Naive thymus-derived CD4-positive, alpha-beta T cell (primary cell): ENCODE measurements at regions of chr1 and their contacts with region 1.

Region 1: DNA sequence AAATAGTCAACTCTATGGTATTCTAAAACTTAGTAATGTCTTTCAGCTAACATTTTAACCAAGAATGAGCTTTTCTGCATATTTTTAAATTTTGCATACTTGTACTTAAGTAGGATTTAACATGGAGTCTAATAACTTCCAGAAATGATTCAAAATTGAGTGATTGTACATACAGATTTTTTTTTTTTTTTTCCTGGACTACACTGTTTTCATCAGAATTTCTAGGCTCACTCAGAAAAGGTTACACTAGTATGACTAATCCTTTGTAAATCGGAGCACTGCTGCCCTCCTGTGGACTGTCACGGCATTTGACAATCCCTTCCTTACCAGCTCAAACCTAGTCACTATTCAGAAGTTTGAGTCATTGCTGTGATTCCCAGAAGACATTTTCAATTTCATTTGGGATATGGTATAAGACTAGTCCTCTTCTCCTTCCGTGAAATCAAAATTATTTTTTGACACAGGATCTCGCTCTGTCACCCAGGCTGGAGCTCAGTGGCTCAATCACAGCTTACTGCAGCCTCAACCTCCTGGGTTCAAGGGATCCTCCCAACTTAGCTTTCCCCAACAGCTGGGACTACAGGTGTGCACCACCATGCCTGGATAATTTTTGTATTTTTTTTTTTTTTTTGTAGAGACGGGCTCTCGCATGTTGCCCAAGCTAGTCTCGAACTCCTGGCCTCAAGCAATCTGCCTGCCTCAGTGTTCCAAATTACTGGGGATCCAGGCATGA is 45.5 kb downstream of the CD46 start:
- DNase-seq: peak; percentile 46 to 69 (median 63)
- ATAC-seq: peak; percentile 88
- H3K4me3 ChIP-seq: no peak overlapping the region
- H3K4me3 Mint-ChIP-seq: no peak overlapping the region
- H3K27ac ChIP-seq: no peak overlapping the region
- H3K27ac Mint-ChIP-seq: peak overlapping the region in 3 of 9 donors; percentile 48 to 72 (median 67)
- H3K4me1 ChIP-seq: peaks cover 9 to 20% of the 10 kb centered on the region in 2 donors
- H3K4me1 Mint-ChIP-seq: peaks cover 24 to 48% (median 35%) of the 10 kb centered on the region in 7 donors
- H3K27me3 ChIP-seq: no peaks in the 10 kb centered on the region
- H3K27me3 Mint-ChIP-seq: no peaks in the 10 kb centered on the region

Region 2: GRCh38 chr1:207565546-207566358 is 231.6 kb before region 1 on chr1:
- CTCF ChIA-PET with region 1: no interaction called
- POLR2A ChIA-PET with region 1: no interaction called
- intact Hi-C with region 1: no loop called
- DNase-seq: no peak
- ATAC-seq: peak; percentile 51
- H3K4me3 ChIP-seq: no peak overlapping the region
- H3K4me3 Mint-ChIP-seq: no peak overlapping the region
- H3K27ac ChIP-seq: no peak overlapping the region
- H3K27ac Mint-ChIP-seq: no peak overlapping the region
- H3K4me1 ChIP-seq: no peaks in the 10 kb centered on the region
- H3K4me1 Mint-ChIP-seq: no peaks in the 10 kb centered on the region
- H3K27me3 ChIP-seq: no peaks in the 10 kb centered on the region
- H3K27me3 Mint-ChIP-seq: peaks cover 0 to 12% (median 5%) of the 10 kb centered on the region in 5 donors

Region 3: DNA sequence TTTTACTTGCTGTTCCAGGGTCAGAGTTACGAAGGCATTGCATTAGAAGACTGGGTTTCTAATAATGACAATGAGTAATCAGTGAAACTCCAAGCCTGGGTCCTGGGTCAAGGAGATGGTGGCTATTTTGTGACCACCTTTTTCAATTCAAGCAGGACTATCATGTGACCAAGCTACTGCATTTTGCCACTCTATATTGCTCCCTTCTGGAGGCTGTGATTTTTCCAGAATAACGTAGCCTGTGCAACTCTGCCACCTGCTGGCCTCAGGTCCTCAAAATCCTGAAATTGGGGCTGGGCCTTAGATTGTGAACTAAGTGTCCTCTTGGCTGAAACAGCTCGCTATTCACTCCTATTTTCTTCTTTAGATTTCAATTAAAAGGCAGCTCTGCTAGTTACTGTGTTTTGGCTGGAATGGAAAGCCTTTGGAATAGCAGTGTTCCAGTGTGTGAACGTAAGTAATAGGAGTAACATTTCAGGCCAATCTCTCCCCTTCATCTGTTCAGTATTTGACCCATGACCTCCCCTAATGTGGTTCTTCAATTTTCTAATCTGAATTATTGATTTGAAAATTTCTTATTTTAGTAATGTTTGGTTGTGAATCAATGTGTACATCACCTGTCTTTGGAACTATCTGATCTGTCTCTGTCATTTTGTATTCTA is 98.4 kb before region 1 on chr1:
- CTCF ChIA-PET with region 1: interaction called, 7 read pairs
- POLR2A ChIA-PET with region 1: interaction called, 4 read pairs
- intact Hi-C with region 1: loop called (anchors 1 to 5 kb)
- DNase-seq: peak in 5 of 9 donors; percentile 7 to 29 (median 17)
- ATAC-seq: peak; percentile 76
- H3K4me3 ChIP-seq: no peak overlapping the region
- H3K4me3 Mint-ChIP-seq: no peak overlapping the region
- H3K27ac ChIP-seq: no peak overlapping the region
- H3K27ac Mint-ChIP-seq: no peak overlapping the region
- H3K4me1 ChIP-seq: no peaks in the 10 kb centered on the region
- H3K4me1 Mint-ChIP-seq: no peaks in the 10 kb centered on the region
- H3K27me3 ChIP-seq: no peaks in the 10 kb centered on the region
- H3K27me3 Mint-ChIP-seq: peaks cover 2 to 32% (median 9%) of the 10 kb centered on the region in 5 donors

Region 4: GRCh38 chr1:207751790-207752455 is 45.5 kb before region 1 on chr1 and contains the start of gene CD46:
- CTCF ChIA-PET with region 1: interaction called, 6 read pairs
- POLR2A ChIA-PET with region 1: interaction called, 4 read pairs
- intact Hi-C with region 1: loop called (anchors 2 to 5 kb)
- DNase-seq: peak; percentile 88 to 95 (median 90)
- ATAC-seq: peak; percentile 99
- H3K4me3 ChIP-seq: peak within 1 kb of the TSS; percentile 92
- H3K4me3 Mint-ChIP-seq: peak within 1 kb of the TSS; percentile 94 to 100 (median 99)
- H3K27ac ChIP-seq: peak within 1 kb of the TSS; percentile 90
- H3K27ac Mint-ChIP-seq: peak within 1 kb of the TSS; percentile 96 to 99 (median 97)
- H3K4me1 ChIP-seq: peaks cover 27 to 50% of the 10 kb centered on the region in 2 donors
- H3K4me1 Mint-ChIP-seq: peaks cover 49 to 93% (median 86%) of the 10 kb centered on the region in 7 donors
- H3K27me3 ChIP-seq: no peaks in the 10 kb centered on the region
- H3K27me3 Mint-ChIP-seq: peaks cover 0 to under 1% (median 0%) of the 10 kb centered on the region in 5 donors
- total RNA-seq, gene CD46: 121 to 216 (median 127) TPM

Region 5: GRCh38 chr1:207853372-207853757 is 56.0 kb after region 1 on chr1:
- CTCF ChIA-PET with region 1: interaction called, 13 read pairs
- POLR2A ChIA-PET with region 1: no interaction called
- intact Hi-C with region 1: no loop called
- DNase-seq: no peak
- ATAC-seq: no peak
- H3K4me3 ChIP-seq: no peak overlapping the region
- H3K4me3 Mint-ChIP-seq: peak overlapping the region in 9 of 10 donors; percentile 3 to 72 (median 62)
- H3K27ac ChIP-seq: no peak overlapping the region
- H3K27ac Mint-ChIP-seq: peak overlapping the region in 8 of 9 donors; percentile 14 to 88 (median 60)
- H3K4me1 ChIP-seq: peaks cover 55 to 76% of the 10 kb centered on the region in 2 donors
- H3K4me1 Mint-ChIP-seq: peaks cover 75 to 94% (median 83%) of the 10 kb centered on the region in 7 donors
- H3K27me3 ChIP-seq: no peaks in the 10 kb centered on the region
- H3K27me3 Mint-ChIP-seq: no peaks in the 10 kb centered on the region

Region 6: GRCh38 chr1:207876131-207876530 is 78.7 kb after region 1 on chr1:
- CTCF ChIA-PET with region 1: interaction called, 10 read pairs
- POLR2A ChIA-PET with region 1: no interaction called
- intact Hi-C with region 1: no loop called
- DNase-seq: no peak
- ATAC-seq: no peak
- H3K4me3 ChIP-seq: no peak overlapping the region
- H3K4me3 Mint-ChIP-seq: peak overlapping the region in 2 of 10 donors; percentile 16 to 39
- H3K27ac ChIP-seq: no peak overlapping the region
- H3K27ac Mint-ChIP-seq: peak overlapping the region in 7 of 9 donors; percentile 29 to 93 (median 69)
- H3K4me1 ChIP-seq: peaks cover 20 to 38% of the 10 kb centered on the region in 2 donors
- H3K4me1 Mint-ChIP-seq: peaks cover 48 to 62% (median 57%) of the 10 kb centered on the region in 7 donors
- H3K27me3 ChIP-seq: no peaks in the 10 kb centered on the region
- H3K27me3 Mint-ChIP-seq: no peaks in the 10 kb centered on the region

Region 7: GRCh38 chr1:207963427-207964194 is 166.2 kb after region 1 on chr1:
- CTCF ChIA-PET with region 1: interaction called, 17 read pairs
- POLR2A ChIA-PET with region 1: no interaction called
- intact Hi-C with region 1: loop called (anchors 1 kb)
- DNase-seq: peak; percentile 61 to 94 (median 80)
- ATAC-seq: peak; percentile 95
- H3K4me3 ChIP-seq: peak overlapping the region; percentile 87
- H3K4me3 Mint-ChIP-seq: peak overlapping the region; percentile 78 to 92 (median 84)
- H3K27ac ChIP-seq: peak overlapping the region; percentile 63
- H3K27ac Mint-ChIP-seq: peak overlapping the region in 8 of 9 donors; percentile 12 to 83 (median 68)
- H3K4me1 ChIP-seq: peaks cover 3 to 5% of the 10 kb centered on the region in 2 donors
- H3K4me1 Mint-ChIP-seq: peaks cover 6 to 15% (median 9%) of the 10 kb centered on the region in 7 donors
- H3K27me3 ChIP-seq: peaks cover 0 to 7% of the 10 kb centered on the region in 2 donors
- H3K27me3 Mint-ChIP-seq: peaks cover 10 to 50% (median 22%) of the 10 kb centered on the region in 5 donors

Region 8: GRCh38 chr1:208047975-208048374 is 250.6 kb after region 1 on chr1:
- CTCF ChIA-PET with region 1: no interaction called
- POLR2A ChIA-PET with region 1: no interaction called
- intact Hi-C with region 1: no loop called
- DNase-seq: no peak
- ATAC-seq: no peak
- H3K4me3 ChIP-seq: no peak overlapping the region
- H3K4me3 Mint-ChIP-seq: no peak overlapping the region
- H3K27ac ChIP-seq: no peak overlapping the region
- H3K27ac Mint-ChIP-seq: no peak overlapping the region
- H3K4me1 ChIP-seq: no peaks in the 10 kb centered on the region
- H3K4me1 Mint-ChIP-seq: peaks cover 0 to 20% (median 7%) of the 10 kb centered on the region in 7 donors
- H3K27me3 ChIP-seq: no peaks in the 10 kb centered on the region
- H3K27me3 Mint-ChIP-seq: peaks cover 10 to 31% (median 14%) of the 10 kb centered on the region in 5 donors